ENCODE measurements at regions of chr7 and their contacts with region 1.

Region 1: DNA sequence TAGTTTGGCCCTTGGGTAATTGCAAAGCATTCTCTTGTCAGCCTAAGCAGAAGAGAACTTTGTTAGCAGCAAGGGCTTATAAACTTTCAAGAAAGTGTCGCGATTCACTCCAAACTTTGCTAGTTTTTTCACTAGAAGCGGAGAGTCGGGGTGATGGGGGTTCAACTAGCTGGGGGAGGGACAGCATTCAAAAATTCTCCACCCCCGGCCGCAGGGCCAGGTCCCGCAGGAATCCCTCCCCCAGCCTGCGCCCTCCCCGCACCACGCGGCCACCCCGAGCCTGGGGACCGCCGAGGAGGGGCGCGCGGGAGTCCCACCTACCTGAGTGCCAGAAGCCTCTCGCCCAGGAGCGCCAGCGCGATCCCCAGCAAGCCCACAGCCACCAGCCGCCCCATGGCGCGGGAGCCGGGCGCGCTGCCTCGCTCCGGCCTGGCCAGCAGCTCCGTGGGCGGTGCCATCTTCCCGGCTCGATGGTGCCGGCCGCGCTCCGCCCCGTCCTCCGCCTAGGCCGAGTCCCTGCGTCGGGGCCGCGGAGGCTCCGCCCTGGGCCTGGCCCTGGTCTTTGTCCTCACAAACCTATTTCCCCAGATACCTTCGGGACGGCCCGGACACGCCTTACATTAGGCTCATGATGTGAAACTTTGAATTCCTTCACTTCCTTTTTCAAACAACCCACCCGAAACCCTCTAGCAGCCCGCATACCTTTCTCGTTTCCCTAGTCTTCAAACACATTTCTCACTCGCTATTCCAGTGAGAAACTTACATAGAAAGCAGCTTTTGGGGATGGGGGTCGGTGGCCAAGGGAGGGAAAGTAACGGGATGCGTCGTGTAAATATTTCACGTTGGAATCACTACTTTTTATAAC is at the start of gene PON2:
- DNase-seq: peak; percentile 61
- ATAC-seq: peak; percentile 91
- H3K4me3 Mint-ChIP-seq: peak within 1 kb of the TSS; percentile 74
- H3K27ac Mint-ChIP-seq: peak within 1 kb of the TSS; percentile 79
- H3K4me1 Mint-ChIP-seq: peaks cover 8% of the 10 kb centered on the region
- H3K27me3 Mint-ChIP-seq: peaks cover 5% of the 10 kb centered on the region
- total RNA-seq, gene PON2: 4.5 to 4.9 TPM

Region 2: GRCh38 chr7:95396136-95397032 is 38.4 kb before region 1 on chr7 and contains the start of gene PON3:
- CTCF ChIA-PET with region 1: no interaction called
- POLR2A ChIA-PET with region 1: no interaction called
- intact Hi-C with region 1: loop called in 1 of 2 experiments (anchors 1 kb)
- DNase-seq: peak; percentile 60
- ATAC-seq: peak; percentile 92
- H3K4me3 Mint-ChIP-seq: peak within 1 kb of the TSS; percentile 64
- H3K27ac Mint-ChIP-seq: no peak within 1 kb of the TSS
- H3K4me1 Mint-ChIP-seq: peaks cover 8% of the 10 kb centered on the region
- H3K27me3 Mint-ChIP-seq: peaks cover 29% of the 10 kb centered on the region
- total RNA-seq, gene PON3: not detected

Region 3: DNA sequence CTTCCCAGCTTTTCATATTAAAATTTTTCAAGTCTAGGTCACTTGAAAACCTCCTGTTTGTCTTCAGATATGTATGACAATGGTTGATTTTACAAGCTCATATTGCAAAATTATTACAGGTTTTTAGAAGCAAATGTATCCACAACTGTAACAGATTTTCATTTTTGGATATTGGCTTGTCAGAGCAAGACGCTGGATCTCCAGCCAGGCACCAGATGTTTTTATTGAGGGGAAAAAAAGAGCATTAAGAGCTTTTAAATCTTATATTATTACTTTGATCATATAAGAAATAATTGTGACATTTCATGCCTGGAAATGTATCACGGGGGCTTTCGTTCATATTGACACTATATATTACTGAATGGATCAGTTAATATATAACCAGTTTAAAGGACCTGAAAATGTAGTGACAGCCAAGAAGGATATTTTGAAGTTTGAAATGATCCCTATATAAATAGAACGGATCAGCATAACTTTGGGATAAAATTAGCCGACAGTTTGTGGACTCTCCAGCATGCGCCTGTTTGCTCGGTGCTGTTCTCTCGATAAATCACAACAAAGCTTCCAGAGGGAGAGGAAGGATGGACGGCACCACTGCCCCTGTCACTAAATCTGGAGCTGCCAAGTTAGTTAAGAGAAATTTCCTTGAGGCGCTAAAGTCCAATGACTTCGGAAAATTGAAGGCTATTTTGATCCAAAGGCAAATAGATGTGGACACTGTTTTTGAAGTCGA is 50.8 kb after region 1 on chr7 and contains the start of gene ASB4:
- CTCF ChIA-PET with region 1: no interaction called
- POLR2A ChIA-PET with region 1: no interaction called
- intact Hi-C with region 1: no loop called
- DNase-seq: no peak
- ATAC-seq: no peak
- H3K4me3 Mint-ChIP-seq: no peak within 1 kb of the TSS
- H3K27ac Mint-ChIP-seq: no peak within 1 kb of the TSS
- H3K4me1 Mint-ChIP-seq: no peaks in the 10 kb centered on the region
- H3K27me3 Mint-ChIP-seq: peaks cover 1% of the 10 kb centered on the region
- total RNA-seq, gene ASB4: not detected

Region 4: GRCh38 chr7:95501261-95501832 is 66.6 kb after region 1 on chr7:
- CTCF ChIA-PET with region 1: no interaction called
- POLR2A ChIA-PET with region 1: no interaction called
- intact Hi-C with region 1: loop called in 1 of 2 experiments (anchors 2 kb)
- DNase-seq: peak; percentile 46
- ATAC-seq: peak; percentile 92
- H3K4me3 Mint-ChIP-seq: no peak overlapping the region
- H3K27ac Mint-ChIP-seq: peak overlapping the region; percentile 66
- H3K4me1 Mint-ChIP-seq: peaks cover 24% of the 10 kb centered on the region
- H3K27me3 Mint-ChIP-seq: peaks cover 15% of the 10 kb centered on the region

Measured in activated CD4-positive, alpha-beta T cell treated with anti-CD3 and anti-CD28 coated beads for 36 hours (primary cell).